ENCODE measurements at regions of chrX and their contacts with region 1.

Region 1: GRCh38 chrX:109856974-109857373 is 123.9 kb upstream of the ACSL4 start:
- DNase-seq: no peak
- H3K4me3 ChIP-seq: no peak overlapping the region
- H3K27ac ChIP-seq: peak overlapping the region in 1 of 4 donors; percentile 39
- H3K4me1 ChIP-seq: peaks cover 0 to 4% (median 0%) of the 10 kb centered on the region in 4 donors
- H3K27me3 ChIP-seq: no peaks in the 10 kb centered on the region
- CTCF ChIP-seq: peak; percentile 67 to 81 (median 75)
- EP300 ChIP-seq: no peak
- POLR2A ChIP-seq: no peak

Region 2: GRCh38 chrX:109714340-109714958 is 142.5 kb before region 1 on chrX:
- intact Hi-C with region 1: loop called (anchors 5 kb)
- DNase-seq: no peak
- H3K4me3 ChIP-seq: no peak overlapping the region
- H3K27ac ChIP-seq: no peak overlapping the region
- H3K4me1 ChIP-seq: peaks cover 12 to 36% (median 18%) of the 10 kb centered on the region in 4 donors
- H3K27me3 ChIP-seq: no peaks in the 10 kb centered on the region
- CTCF ChIP-seq: no peak
- EP300 ChIP-seq: no peak
- POLR2A ChIP-seq: no peak